A549 (cell line): ENCODE measurements at regions of chr2 and their contacts with region 1.

Region 1: GRCh38 chr2:26846328-26847306 is 1.3 kb upstream of the DPYSL5 start:
- DNase-seq: peak; percentile 80 to 90
- ATAC-seq: peak; percentile 71 to 82
- H3K4me3 ChIP-seq: no peak overlapping the region
- H3K27ac ChIP-seq: peak overlapping the region in 1 of 2 experiments; percentile 59; a peak in 2 of 6 replicates
- H3K4me1 ChIP-seq: peaks cover 12% of the 10 kb centered on the region; the same call in 2 of the 3 replicates
- CTCF ChIP-seq: peak; percentile 97
- EP300 ChIP-seq: no peak
- POLR2A ChIP-seq: no peak
- RAD21 ChIP-seq: peak; percentile 96 to 97

Region 2: GRCh38 chr2:26792720-26793119 is 53.9 kb before region 1 on chr2:
- CTCF ChIA-PET with region 1: interaction called, 15 read pairs
- POLR2A ChIA-PET with region 1: no interaction called
- DNase-seq: no peak
- ATAC-seq: no peak
- H3K4me3 ChIP-seq: no peak overlapping the region
- H3K27ac ChIP-seq: no peak overlapping the region
- H3K4me1 ChIP-seq: peaks cover 3% of the 10 kb centered on the region; the same call in 2 of the 3 replicates
- CTCF ChIP-seq: no peak
- EP300 ChIP-seq: no peak
- POLR2A ChIP-seq: no peak
- RAD21 ChIP-seq: no peak

Region 3: GRCh38 chr2:26861610-26862224 is 15.1 kb after region 1 on chr2:
- CTCF ChIA-PET with region 1: interaction called, 41 read pairs
- POLR2A ChIA-PET with region 1: no interaction called
- DNase-seq: no peak
- ATAC-seq: no peak
- H3K4me3 ChIP-seq: no peak overlapping the region
- H3K27ac ChIP-seq: no peak overlapping the region
- H3K4me1 ChIP-seq: no peaks in the 10 kb centered on the region
- CTCF ChIP-seq: no peak
- EP300 ChIP-seq: no peak
- POLR2A ChIP-seq: no peak
- RAD21 ChIP-seq: no peak

Region 4: GRCh38 chr2:26901326-26902183 is 54.9 kb after region 1 on chr2:
- CTCF ChIA-PET with region 1: interaction called, 10 read pairs
- POLR2A ChIA-PET with region 1: no interaction called
- DNase-seq: no peak
- ATAC-seq: no peak
- H3K4me3 ChIP-seq: no peak overlapping the region
- H3K27ac ChIP-seq: no peak overlapping the region
- H3K4me1 ChIP-seq: no peaks in the 10 kb centered on the region
- CTCF ChIP-seq: no peak
- EP300 ChIP-seq: no peak
- POLR2A ChIP-seq: no peak
- RAD21 ChIP-seq: no peak

Region 5: GRCh38 chr2:26942543-26943295 is 96.1 kb after region 1 on chr2:
- CTCF ChIA-PET with region 1: interaction called, 669 read pairs
- POLR2A ChIA-PET with region 1: no interaction called
- DNase-seq: peak; percentile 78 to 87
- ATAC-seq: peak; percentile 64 to 82; a peak in 5 of 6 replicates
- H3K4me3 ChIP-seq: no peak overlapping the region
- H3K27ac ChIP-seq: no peak overlapping the region
- H3K4me1 ChIP-seq: peaks cover 8% of the 10 kb centered on the region; the same call in 1 of the 3 replicates
- CTCF ChIP-seq: peak; percentile 96
- EP300 ChIP-seq: no peak
- POLR2A ChIP-seq: no peak
- RAD21 ChIP-seq: peak; percentile 79 to 88

Region 6: GRCh38 chr2:26993768-26994167 is 147.2 kb after region 1 on chr2:
- CTCF ChIA-PET with region 1: interaction called, 12 read pairs
- POLR2A ChIA-PET with region 1: no interaction called
- DNase-seq: no peak
- ATAC-seq: no peak
- H3K4me3 ChIP-seq: no peak overlapping the region
- H3K27ac ChIP-seq: no peak overlapping the region
- H3K4me1 ChIP-seq: peaks cover 3% of the 10 kb centered on the region; the same call in 1 of the 3 replicates
- CTCF ChIP-seq: no peak
- EP300 ChIP-seq: no peak
- POLR2A ChIP-seq: no peak
- RAD21 ChIP-seq: no peak

Region 7: DNA sequence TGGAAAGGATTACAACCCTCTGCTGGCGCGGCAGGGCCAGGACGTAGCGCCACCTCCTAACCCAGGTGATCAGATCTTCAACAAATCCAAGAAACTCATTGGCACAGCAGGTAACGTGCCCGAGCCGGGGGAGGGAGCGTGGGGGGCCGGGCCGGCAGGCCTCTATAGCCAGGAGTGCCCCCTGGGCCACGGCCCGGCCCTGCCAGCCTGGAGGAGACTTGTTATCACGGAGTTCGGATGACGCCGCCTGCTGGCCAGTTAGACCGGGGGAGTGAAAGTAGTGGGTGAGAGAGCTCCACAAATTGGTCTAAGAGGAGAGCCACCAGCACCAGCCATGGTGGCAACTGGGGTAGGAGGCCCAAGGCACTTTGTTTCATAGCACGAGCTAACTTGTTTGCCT is 177.6 kb after region 1 on chr2:
- CTCF ChIA-PET with region 1: interaction called, 175 read pairs
- POLR2A ChIA-PET with region 1: no interaction called
- DNase-seq: peak; percentile 50 to 58
- ATAC-seq: peak; percentile 9 to 76; a peak in 3 of 6 replicates
- H3K4me3 ChIP-seq: no peak overlapping the region
- H3K27ac ChIP-seq: no peak overlapping the region
- H3K4me1 ChIP-seq: peaks cover 21% of the 10 kb centered on the region
- CTCF ChIP-seq: peak; percentile 40
- EP300 ChIP-seq: no peak
- POLR2A ChIP-seq: no peak
- RAD21 ChIP-seq: 0 out of 5 replicates have a peak, but pooled peaks of 1 of the 2 experiments have one; percentile 13